ENCODE measurements at regions of chr6 and their contacts with region 1.

Region 1: GRCh38 chr6:119676961-119677360 is 327.4 kb upstream of the MAN1A1 start:
- DNase-seq: no peak

Region 2: GRCh38 chr6:117681162-117681741 is 1995.7 kb before region 1 on chr6:
- intact Hi-C with region 1: loop called in 1 of 2 experiments (anchors 5 kb)
- DNase-seq: no peak

Region 3: DNA sequence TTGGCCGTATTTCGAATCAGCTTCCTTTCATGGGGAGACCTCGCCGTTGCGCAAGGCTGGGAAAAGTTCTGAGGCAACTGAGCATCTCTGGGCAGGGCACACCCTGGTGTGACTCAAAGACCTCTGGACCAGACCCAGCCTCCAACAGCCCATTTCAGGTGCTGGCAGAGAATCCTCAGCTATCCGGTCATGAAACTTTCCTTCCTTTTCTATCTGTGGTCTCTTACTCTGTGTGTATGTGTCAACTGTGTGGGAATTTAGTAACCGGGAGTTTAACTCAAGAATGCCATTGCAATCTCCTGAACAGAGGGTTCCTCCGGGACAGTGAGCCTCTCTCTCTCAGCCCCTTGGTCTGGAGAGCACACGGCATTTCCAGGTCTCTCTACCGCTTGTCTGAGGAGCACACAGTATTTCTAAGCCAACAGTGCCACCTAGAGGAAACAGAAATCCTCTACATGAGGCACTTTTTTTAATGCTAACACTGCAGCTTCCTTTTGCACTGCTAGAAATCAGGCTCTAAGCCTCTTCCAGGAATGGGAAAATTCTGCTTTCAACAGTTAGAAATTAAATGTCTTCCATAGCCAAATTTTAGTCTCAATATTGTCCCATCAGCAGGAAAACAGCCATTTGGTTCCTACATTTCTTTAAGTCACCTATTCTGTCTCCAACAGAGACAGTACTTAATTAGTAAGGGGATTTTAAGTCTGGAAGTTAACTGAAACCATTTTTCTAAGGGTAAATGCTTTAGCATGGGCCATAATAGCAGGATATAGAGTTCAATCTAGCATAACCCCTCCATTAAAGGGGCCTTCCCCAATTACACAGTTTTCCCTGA is 1096.2 kb before region 1 on chr6:
- intact Hi-C with region 1: loop called in 1 of 2 experiments (anchors 5 kb)
- DNase-seq: no peak

Region 4: GRCh38 chr6:120056085-120056484 is 379.1 kb after region 1 on chr6:
- intact Hi-C with region 1: no loop called
- DNase-seq: no peak